ENCODE measurements at regions of chr17 and their contacts with region 1.

Region 1: DNA sequence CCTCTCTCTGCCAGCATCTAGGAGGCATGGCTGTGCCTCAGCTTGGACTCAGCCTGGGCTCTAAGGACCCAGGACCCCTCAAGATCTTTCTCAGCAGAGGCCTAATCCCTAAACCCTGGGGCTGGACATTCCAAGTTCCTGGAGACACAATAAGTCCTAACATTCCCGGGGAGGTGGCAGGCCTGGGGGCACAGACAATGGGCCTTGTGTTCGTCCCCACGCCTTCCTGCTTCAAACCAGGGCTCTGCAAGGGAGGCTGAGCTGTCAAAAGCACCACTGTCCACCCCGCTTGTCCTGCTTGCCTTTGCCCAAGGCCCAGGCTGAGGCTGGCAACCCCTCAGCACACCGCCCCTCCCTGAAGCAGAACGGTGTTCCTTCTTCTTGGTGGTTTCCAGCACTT is 13.7 kb downstream of the SDK2 start:
- DNase-seq: no peak
- H3K4me3 ChIP-seq: no peak overlapping the region
- H3K27ac ChIP-seq: no peak overlapping the region
- H3K4me1 ChIP-seq: peaks cover 0 to 8% of the 10 kb centered on the region in 2 donors
- H3K27me3 ChIP-seq: no peaks in the 10 kb centered on the region
- CTCF ChIP-seq: no peak
- POLR2A ChIP-seq: no peak

Region 2: GRCh38 chr17:73551759-73552158 is 78.8 kb before region 1 on chr17:
- intact Hi-C with region 1: loop called (anchors 2 kb)
- DNase-seq: no peak
- H3K4me3 ChIP-seq: no peak overlapping the region
- H3K27ac ChIP-seq: no peak overlapping the region
- H3K4me1 ChIP-seq: peaks cover 0 to 34% of the 10 kb centered on the region in 2 donors
- H3K27me3 ChIP-seq: no peaks in the 10 kb centered on the region
- CTCF ChIP-seq: no peak
- POLR2A ChIP-seq: no peak